Heart right ventricle (tissue), 16 donors: ENCODE measurements at regions of chr1 and their contacts with region 1.

Region 1: DNA sequence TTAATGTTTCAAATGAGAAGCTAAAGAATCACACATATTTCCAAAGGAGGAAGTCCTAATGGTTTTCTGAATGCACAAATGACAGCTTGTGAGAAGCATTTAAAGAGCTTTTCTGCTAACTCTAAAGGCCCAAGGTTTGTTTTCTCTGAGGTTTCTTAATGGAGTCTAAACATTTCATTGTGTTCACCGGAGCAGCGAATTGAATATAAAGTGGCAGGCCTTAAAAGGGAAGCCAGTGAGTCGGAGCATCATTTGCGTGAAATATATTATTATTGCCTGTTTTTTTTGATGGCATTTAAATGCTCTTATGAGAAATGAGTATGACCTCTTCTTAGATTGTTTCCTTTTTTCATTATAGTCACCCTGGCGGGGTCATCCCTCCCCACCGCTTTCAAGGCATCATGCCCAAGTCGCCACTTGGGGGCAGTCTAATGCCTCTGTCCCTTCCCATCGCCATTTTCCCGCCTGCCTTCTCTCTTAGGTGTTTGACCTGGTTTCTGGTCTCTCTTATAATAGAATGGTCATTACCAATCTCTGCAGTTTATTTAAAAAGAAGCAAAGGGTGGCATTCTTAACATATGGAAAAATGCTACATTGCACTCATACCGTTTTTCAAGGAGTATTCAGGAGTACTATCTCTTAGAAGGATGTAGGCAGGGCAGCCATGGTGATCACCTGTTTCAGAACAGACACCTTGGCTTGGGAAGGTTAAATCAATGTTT is 25.3 kb upstream of the OVAAL start:
- DNase-seq: peak; percentile 60 to 75
- ATAC-seq: peak; percentile 62 to 86 (median 78)
- H3K4me3 ChIP-seq: no peak overlapping the region
- H3K27ac ChIP-seq: peak overlapping the region in 4 of 10 donors; percentile 9 to 42 (median 28)
- H3K4me1 ChIP-seq: peaks cover 0 to 44% (median 18%) of the 10 kb centered on the region in 9 donors
- H3K27me3 ChIP-seq: no peaks in the 10 kb centered on the region
- CTCF ChIP-seq: peak; percentile 76 to 93 (median 87)

Region 2: DNA sequence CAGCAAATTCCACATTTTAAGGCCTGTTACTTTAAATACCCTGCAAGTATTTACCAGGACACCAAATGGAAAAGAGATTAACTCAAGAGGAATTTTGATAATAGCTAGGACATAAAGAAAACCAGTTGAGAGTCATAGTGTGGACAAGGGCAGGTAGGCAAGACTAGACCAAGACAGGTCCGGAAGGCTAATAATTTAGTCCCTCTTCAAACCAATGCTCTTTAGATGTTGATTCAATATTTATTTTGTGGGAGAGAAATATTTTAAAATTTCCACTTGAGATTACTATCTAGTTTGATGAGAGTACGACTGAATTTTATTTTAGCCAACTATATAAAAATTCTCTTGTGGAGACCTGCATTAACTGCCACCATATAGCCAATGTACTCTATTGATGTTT is 19.2 kb after region 1 on chr1:
- intact Hi-C with region 1: loop called in 1 of 10 experiments (anchors 1 kb)
- DNase-seq: no peak
- ATAC-seq: no peak
- H3K4me3 ChIP-seq: no peak overlapping the region
- H3K27ac ChIP-seq: no peak overlapping the region
- H3K4me1 ChIP-seq: peaks cover 0 to 20% (median 1%) of the 10 kb centered on the region in 9 donors
- H3K27me3 ChIP-seq: no peaks in the 10 kb centered on the region
- CTCF ChIP-seq: no peak

Region 3: GRCh38 chr1:180563026-180563827 is 29.8 kb after region 1 on chr1:
- intact Hi-C with region 1: loop called in 2 of 10 experiments (anchors 5 kb)
- DNase-seq: peak in 1 of 2 donors; percentile 38
- ATAC-seq: peak; percentile 59 to 81 (median 75)
- H3K4me3 ChIP-seq: no peak overlapping the region
- H3K27ac ChIP-seq: peak overlapping the region; percentile 75 to 90 (median 86)
- H3K4me1 ChIP-seq: peaks cover 4 to 80% (median 45%) of the 10 kb centered on the region in 9 donors
- H3K27me3 ChIP-seq: no peaks in the 10 kb centered on the region
- CTCF ChIP-seq: no peak

Region 4: DNA sequence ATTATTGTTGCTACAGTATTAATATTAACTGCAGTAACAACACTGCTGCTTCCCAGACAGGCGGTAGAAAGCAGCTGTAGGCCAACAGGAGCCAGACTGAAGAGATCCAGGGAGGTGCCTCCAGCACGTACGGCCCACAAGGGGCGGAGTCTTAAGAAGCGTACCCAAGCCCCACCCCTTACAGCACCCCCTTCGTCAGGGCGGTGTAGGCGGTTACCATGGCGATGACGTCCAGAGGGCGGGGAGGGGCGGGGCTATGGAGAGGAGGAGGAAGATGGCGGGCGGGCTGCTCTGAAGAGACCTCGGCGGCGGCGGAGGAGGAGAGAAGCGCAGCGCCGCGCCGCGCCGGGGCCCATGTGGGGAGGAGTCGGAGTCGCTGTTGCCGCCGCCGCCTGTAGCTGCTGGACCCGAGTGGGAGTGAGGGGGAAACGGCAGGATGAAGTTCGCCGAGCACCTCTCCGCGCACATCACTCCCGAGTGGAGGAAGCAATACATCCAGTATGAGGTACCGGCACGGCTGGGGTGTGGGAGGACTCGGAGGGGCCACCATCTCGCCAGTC is 98.4 kb after region 1 on chr1 and contains the start of gene XPR1:
- intact Hi-C with region 1: loop called in 8 of 10 experiments (anchors 5 to 10 kb)
- DNase-seq: peak; percentile 99
- ATAC-seq: peak; percentile 98 to 99 (median 99)
- H3K4me3 ChIP-seq: peak within 1 kb of the TSS; percentile 75 to 94 (median 86)
- H3K27ac ChIP-seq: peak within 1 kb of the TSS; percentile 90 to 98 (median 94)
- H3K4me1 ChIP-seq: peaks cover 0 to 51% (median 27%) of the 10 kb centered on the region in 9 donors
- H3K27me3 ChIP-seq: no peaks in the 10 kb centered on the region
- CTCF ChIP-seq: peak; percentile 13 to 55 (median 32)
- total RNA-seq, gene XPR1: 28.2 to 142 (median 78.7) TPM

Region 5: DNA sequence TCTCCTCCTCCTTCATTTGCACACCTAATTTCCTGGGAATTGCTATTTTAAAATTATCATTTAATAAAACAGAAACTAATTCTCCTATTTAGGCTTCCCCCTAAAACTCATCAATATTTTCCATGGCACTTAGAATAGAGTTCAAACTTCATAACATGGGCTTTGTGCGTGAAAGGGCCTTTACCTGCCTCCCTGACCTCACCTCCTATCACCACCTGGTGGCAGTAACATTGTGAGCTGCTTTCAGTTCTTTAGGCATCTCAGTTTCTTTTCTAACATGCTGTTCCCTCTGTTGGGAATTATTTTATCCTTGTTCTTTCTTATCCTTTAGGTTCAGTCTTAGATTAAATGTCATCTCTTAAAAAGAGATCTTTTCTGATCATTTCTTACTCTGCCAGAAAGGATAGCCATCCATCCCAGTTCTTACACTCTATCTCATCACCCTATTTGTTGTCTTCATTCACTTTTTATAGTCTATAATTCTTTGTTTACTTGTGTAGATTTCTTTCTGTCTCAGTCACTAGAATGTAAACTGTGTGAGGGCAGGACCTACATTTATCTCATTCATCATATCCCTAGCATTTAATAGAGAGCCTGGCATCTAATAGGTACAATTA is 245.5 kb after region 1 on chr1:
- intact Hi-C with region 1: loop called in 1 of 10 experiments (anchors 10 kb)
- DNase-seq: no peak
- ATAC-seq: no peak
- H3K4me3 ChIP-seq: no peak overlapping the region
- H3K27ac ChIP-seq: no peak overlapping the region
- H3K4me1 ChIP-seq: peaks cover 0 to 28% (median 8%) of the 10 kb centered on the region in 9 donors
- H3K27me3 ChIP-seq: no peaks in the 10 kb centered on the region
- CTCF ChIP-seq: peak in 3 of 9 donors; percentile 24 to 34 (median 33)

Region 6: DNA sequence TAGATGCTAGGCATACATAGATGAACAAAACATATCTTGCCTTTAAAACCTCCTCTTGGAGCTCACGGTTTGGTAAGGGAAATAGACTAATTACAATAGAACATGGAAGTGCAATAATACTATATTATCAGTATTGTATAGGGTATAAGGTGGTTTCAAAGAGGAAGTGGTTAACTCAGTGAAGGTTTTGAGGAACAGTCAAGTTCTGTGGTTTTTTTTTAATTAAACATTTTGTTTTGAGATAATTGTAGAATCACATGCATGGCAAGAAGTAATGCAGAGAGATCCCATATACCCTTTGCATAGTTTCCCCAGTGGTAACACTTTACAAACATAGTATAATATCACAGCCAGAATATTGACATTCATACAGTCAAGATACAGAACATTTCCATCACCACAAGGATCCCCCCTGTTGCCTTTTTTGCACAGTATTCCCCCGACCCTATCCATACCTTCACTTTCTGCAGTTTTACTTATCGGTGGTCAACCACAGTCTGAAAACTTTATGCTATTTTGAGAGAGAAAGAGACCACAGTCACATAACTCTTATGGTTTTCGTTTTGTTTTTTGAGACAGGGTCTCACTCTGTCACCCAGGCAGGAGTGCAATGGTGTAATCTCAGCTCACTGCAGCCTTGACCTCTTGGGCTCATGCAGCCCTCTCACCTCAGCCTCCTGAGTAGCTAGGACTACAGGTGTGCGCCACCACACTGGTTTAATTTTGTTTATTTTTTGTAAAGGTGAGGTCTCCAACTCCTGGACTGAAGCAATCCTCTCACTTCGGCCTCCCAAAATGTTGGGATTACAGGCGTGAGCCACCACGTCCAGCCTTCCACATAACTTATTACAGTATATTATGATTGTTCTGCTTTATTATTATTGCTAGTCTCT is 318.8 kb after region 1 on chr1:
- intact Hi-C with region 1: loop called in 1 of 10 experiments (anchors 2 kb)
- DNase-seq: no peak
- ATAC-seq: no peak
- H3K4me3 ChIP-seq: no peak overlapping the region
- H3K27ac ChIP-seq: no peak overlapping the region
- H3K4me1 ChIP-seq: peaks cover 0 to 43% (median 24%) of the 10 kb centered on the region in 9 donors
- H3K27me3 ChIP-seq: no peaks in the 10 kb centered on the region
- CTCF ChIP-seq: no peak

Region 7: GRCh38 chr1:180863158-180863775 is 329.8 kb after region 1 on chr1:
- intact Hi-C with region 1: loop called in 7 of 10 experiments (anchors 5 kb)
- DNase-seq: peak in 1 of 2 donors; percentile 24
- ATAC-seq: peak in 2 of 8 donors; percentile 33 to 41
- H3K4me3 ChIP-seq: no peak overlapping the region
- H3K27ac ChIP-seq: peak overlapping the region in 1 of 10 donors; percentile 16
- H3K4me1 ChIP-seq: peaks cover 0 to 15% (median 0%) of the 10 kb centered on the region in 9 donors
- H3K27me3 ChIP-seq: no peaks in the 10 kb centered on the region
- CTCF ChIP-seq: peak; percentile 59 to 88 (median 79)